HCT116 (cell line): ENCODE measurements at regions of chr14 and their contacts with region 1.

Region 1: DNA sequence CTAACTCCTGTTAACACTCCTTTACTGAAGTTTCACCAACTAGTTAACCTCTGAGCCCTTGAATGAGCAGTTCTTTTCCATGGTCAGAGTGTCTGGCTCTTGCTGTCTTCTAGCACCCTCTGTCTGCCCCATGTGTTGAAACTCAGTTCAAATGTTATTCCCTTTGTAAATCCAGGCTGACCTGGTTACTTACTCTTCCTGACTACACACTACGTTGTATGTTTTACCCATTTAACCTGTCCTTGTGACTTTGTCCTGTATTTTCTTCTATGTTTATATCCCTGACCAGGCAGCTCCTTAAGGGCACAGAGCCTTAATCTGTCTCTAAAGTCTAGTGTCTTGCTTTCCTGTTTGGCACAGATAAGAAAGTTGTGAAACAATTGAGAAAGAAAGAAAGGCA is 389.0 kb upstream of the RPL10L start:
- DNase-seq: peak; percentile 31
- ATAC-seq: peak; percentile 58
- H3K4me3 ChIP-seq: no peak overlapping the region
- H3K27ac ChIP-seq: no peak overlapping the region
- H3K4me1 ChIP-seq: no peaks in the 10 kb centered on the region
- H3K27me3 ChIP-seq: no peaks in the 10 kb centered on the region
- CTCF ChIP-seq: peak; percentile 18 to 27 (median 26); a peak in 2 of 6 replicates
- POLR2A ChIP-seq: no peak
- RAD21 ChIP-seq: peak; percentile 64

Region 2: GRCh38 chr14:46490238-46490685 is 550.3 kb before region 1 on chr14:
- CTCF ChIA-PET with region 1: interaction called, 3 read pairs
- POLR2A ChIA-PET with region 1: no interaction called
- RAD21 ChIA-PET with region 1: no interaction called
- intact Hi-C with region 1: loop called (anchors 2 kb)
- DNase-seq: peak; percentile 12
- ATAC-seq: no peak
- H3K4me3 ChIP-seq: no peak overlapping the region
- H3K27ac ChIP-seq: no peak overlapping the region
- H3K4me1 ChIP-seq: no peaks in the 10 kb centered on the region
- H3K27me3 ChIP-seq: no peaks in the 10 kb centered on the region
- CTCF ChIP-seq: peak; percentile 23 to 58 (median 45); a peak in 5 of 6 replicates
- POLR2A ChIP-seq: no peak
- RAD21 ChIP-seq: peak; percentile 35; the same call in 1 of the 2 replicates

Region 3: DNA sequence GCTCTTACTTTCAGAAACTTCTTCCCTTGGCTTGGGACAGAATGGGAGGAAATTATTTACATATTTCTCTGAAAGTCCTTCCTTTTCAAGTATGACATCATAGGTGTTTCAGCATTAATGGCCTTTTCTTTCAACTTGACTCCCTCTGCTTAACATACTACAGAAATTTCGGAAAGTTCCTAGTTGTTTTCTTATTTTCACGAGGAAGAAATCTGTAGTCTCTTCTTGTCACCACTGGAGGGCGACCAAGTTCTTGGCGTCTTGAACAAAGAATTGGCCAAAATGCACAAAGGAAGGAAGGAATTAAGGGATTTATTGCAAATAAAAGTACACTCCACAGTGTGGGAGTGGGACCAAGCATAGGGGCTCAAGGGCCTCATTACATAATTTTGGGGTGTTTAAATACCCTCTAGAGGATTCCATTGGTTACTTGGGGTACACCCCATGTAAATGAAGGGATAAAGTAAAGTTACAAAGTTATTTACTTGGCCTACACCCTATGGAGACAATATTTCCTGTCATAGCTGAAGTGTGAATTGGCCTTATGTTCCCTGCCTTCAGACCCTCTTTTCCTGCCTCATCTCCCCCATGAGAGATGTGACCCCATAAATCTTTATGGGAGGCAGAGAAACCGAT is 459.4 kb before region 1 on chr14:
- CTCF ChIA-PET with region 1: no interaction called
- POLR2A ChIA-PET with region 1: no interaction called
- RAD21 ChIA-PET with region 1: no interaction called
- intact Hi-C with region 1: loop called (anchors 1 kb)
- DNase-seq: peak; percentile 31
- ATAC-seq: no peak
- H3K4me3 ChIP-seq: no peak overlapping the region
- H3K27ac ChIP-seq: no peak overlapping the region
- H3K4me1 ChIP-seq: no peaks in the 10 kb centered on the region
- H3K27me3 ChIP-seq: no peaks in the 10 kb centered on the region
- CTCF ChIP-seq: peak; percentile 36 to 71 (median 51); a peak in 5 of 6 replicates
- POLR2A ChIP-seq: no peak
- RAD21 ChIP-seq: peak; percentile 58

Region 4: DNA sequence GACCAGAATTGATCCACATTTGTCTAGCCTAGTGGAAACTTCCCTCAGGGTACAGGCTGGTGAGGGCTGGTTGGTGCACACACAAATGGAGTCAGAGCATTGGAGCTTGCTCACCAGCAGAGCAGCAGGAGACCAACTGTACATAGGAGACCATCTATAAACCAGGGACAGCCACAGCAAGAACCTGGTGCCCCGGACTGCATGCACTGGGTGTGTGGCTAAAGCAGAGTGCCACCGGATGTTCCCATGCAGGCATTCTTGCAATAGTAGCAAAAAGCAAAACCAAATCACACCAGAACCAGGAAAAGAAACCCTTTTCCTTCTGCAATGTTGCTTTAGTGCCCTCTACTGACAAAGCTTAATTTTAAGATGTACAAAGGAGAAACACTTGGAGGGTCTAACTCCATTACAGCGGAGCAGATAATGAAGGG is 498.5 kb after region 1 on chr14:
- CTCF ChIA-PET with region 1: interaction called, 4 read pairs
- POLR2A ChIA-PET with region 1: no interaction called
- RAD21 ChIA-PET with region 1: no interaction called
- intact Hi-C with region 1: loop called (anchors 10 kb)
- DNase-seq: no peak
- ATAC-seq: peak; percentile 54
- H3K4me3 ChIP-seq: no peak overlapping the region
- H3K27ac ChIP-seq: no peak overlapping the region
- H3K4me1 ChIP-seq: no peaks in the 10 kb centered on the region
- H3K27me3 ChIP-seq: no peaks in the 10 kb centered on the region
- CTCF ChIP-seq: peak; percentile 21 to 40 (median 28); a peak in 5 of 6 replicates
- POLR2A ChIP-seq: no peak
- RAD21 ChIP-seq: peak; percentile 43